PC-9 (cell line): ENCODE measurements at regions of chr12 and their contacts with region 1.

Region 1: GRCh38 chr12:124636138-124636978 is 68.9 kb upstream of the NCOR2 start:
- DNase-seq: peak in 1 of 2 experiments; percentile 59
- H3K4me3 ChIP-seq: no peak overlapping the region
- H3K27ac ChIP-seq: peak overlapping the region; percentile 96
- H3K4me1 ChIP-seq: peaks cover 93% of the 10 kb centered on the region
- H3K27me3 ChIP-seq: no peaks in the 10 kb centered on the region
- CTCF ChIP-seq: no peak

Region 2: GRCh38 chr12:124609041-124609995 is 27.0 kb before region 1 on chr12:
- CTCF ChIA-PET with region 1: no interaction called
- POLR2A ChIA-PET with region 1: no interaction called
- intact Hi-C with region 1: loop called (anchors 1 kb)
- DNase-seq: peak; percentile 86 to 97
- H3K4me3 ChIP-seq: no peak overlapping the region; the same call in 1 of the 2 replicates
- H3K27ac ChIP-seq: peak overlapping the region; percentile 76
- H3K4me1 ChIP-seq: peaks cover 41% of the 10 kb centered on the region
- H3K27me3 ChIP-seq: no peaks in the 10 kb centered on the region
- CTCF ChIP-seq: no peak

Region 3: DNA sequence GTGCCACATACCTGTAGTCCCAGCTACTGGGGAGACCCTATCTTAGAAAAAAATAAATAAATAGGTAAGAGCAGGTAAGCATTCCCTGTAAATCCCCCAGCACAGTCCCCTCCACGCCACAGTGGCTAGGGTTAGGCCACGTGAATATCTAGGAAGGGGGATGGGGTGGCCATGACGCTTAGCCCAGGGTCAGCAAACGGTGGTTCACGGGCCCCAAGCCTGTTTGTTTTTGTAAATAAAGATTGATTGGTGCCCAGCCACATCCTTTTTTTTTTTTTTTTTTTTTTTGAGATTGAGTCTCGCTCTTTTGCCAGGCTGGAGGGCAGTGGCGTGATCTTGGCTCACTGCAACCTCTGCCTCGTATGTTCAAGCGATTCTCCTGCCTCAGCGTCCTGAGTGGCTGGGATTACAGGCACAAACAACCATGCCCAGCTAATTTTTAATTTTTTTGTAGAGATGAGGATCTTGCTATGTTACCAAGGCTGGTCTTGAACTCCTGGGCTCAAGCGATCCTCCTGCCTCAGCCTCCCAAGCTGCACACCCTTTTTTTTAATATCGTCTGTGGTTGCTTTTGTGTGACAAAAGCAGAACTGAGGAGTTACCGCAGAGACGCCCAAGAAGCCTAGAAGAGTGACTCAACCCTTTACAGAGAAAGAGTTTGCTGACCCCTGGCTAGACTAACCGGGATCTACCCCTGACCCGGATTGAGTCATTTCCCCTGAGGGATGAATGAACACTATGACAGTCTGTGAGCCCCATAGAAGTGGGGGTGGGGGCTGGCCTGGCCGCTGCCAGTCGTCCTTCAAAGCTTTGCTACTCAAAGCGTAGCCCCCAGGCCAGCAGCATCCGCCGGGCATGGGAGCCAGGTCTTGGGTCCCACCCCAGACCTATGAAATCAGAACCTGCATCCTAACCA is 44.8 kb after region 1 on chr12:
- CTCF ChIA-PET with region 1: no interaction called
- POLR2A ChIA-PET with region 1: interaction called, 3 read pairs
- intact Hi-C with region 1: loop called (anchors 1 kb)
- DNase-seq: peak; percentile 72 to 96
- H3K4me3 ChIP-seq: no peak overlapping the region; the same call in 1 of the 2 replicates
- H3K27ac ChIP-seq: peak overlapping the region; percentile 95
- H3K4me1 ChIP-seq: peaks cover 88% of the 10 kb centered on the region
- H3K27me3 ChIP-seq: no peaks in the 10 kb centered on the region
- CTCF ChIP-seq: peak; percentile 38

Region 4: DNA sequence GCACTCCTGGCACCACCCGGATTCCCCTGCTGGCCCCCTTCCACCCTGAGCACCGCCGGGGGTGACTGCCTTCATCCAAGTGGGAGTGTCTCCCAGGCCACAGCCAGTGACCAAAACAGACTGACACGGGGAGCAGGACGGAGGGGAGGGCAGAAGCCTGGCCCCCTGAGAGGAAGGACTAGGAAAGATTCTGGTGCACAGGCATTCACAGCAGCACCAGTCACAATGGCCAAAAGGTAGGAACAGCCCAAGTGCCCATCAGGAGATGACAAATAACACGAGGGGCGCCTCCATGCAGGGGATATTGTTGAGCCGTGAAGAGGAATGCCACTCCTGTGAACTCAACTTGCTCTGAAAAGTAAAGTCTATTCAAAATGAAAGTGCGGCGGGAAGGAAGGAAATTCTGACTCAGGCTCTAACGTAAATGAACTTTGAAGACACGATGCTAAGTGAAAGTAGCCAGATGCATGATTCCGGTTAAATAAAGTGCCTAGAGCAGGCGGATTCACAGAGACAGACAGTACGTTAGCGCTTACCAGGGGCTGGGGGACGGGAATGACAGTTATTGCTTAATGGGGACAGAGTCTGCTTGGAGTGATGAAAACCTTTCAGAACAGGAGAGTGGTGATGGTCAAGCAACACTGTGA is 77.2 kb after region 1 on chr12:
- CTCF ChIA-PET with region 1: no interaction called
- POLR2A ChIA-PET with region 1: no interaction called
- intact Hi-C with region 1: loop called (anchors 10 kb)
- DNase-seq: peak in 1 of 2 experiments; percentile 62
- H3K4me3 ChIP-seq: no peak overlapping the region
- H3K27ac ChIP-seq: no peak overlapping the region
- H3K4me1 ChIP-seq: peaks cover 26% of the 10 kb centered on the region
- H3K27me3 ChIP-seq: no peaks in the 10 kb centered on the region
- CTCF ChIP-seq: no peak